PC-3 (cell line): ENCODE measurements at regions of chr4 and their contacts with region 1.

Region 1: DNA sequence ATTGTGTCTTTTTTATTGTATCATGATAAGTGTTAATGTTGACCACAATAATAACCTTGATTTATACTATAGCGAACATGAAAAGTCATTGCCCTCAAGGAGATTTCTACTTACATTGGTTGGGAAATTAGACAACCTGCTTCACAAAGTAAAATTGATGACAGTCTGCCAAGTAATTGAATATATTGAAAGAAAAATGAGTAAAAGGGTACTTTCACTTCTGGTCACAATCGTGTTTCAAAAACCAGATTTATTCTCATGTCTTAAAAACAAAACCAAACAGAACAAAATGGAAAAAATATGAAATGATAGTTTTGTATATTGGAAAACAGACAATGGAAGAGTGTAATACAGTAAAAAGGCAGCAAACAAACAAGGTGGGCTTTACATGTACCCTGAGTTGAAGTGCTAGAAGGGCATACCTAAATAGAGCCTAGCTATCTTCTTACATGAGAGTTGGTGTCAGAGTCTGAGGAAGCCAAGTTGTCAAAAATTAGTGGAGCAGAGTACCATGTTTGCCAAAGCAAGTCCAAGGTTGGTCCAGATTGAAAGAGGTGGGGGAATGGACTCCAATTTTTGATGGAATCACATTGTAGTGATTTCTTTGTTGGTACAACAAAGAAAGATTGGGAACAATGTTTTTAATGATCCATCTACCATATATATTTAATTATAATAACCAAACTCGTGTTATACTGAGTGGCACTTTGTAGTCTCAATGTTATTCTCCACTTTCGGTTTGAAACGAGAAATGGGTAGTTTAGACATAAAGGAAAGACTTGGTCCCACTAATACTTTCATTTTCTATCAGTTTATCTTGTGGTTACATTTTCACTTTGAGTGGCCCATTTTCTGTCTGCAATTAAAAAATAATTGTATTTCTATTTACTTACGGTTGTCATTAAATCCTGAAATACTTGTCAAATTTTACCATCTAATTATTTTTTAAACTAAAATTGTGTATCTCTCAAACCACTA is 775.6 kb downstream of the STIM2 start:
- DNase-seq: no peak
- ATAC-seq: no peak
- H3K4me3 ChIP-seq: no peak overlapping the region
- H3K27ac ChIP-seq: no peak overlapping the region
- H3K4me1 ChIP-seq: no peaks in the 10 kb centered on the region
- H3K27me3 ChIP-seq: no peaks in the 10 kb centered on the region
- CTCF ChIP-seq: no peak

Region 2: DNA sequence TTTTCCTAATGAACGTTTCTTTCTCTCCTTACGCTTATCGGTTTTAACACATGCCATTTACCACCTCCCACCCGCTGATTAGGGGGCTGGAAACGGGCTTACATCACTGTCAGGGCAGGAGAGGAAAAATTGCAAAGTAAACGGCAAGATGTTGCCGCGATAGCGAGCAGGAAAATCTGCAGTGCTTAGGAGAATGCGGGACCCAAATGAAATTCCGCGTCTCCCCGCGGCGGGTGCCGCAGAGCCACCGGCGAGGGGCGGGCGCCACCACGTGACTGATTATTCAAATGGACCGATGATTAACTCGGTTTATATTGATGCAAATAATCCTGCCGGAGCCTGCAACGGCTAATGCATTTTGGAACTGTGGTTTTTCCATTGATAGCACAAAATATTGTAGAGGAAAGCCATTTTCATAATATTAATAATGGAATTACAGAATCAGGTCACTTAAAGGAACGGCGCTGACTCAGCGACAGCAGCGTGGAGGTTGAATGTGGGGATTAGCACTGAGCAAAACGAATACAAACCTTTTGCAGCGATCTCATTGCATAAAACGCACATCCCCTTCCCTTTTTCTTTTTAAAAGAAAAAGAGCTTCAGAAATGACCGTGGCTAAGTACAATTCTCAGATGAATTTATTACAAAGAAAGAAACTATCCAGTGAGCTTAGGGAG is 551.4 kb before region 1 on chr4:
- CTCF ChIA-PET with region 1: no interaction called
- POLR2A ChIA-PET with region 1: no interaction called
- intact Hi-C with region 1: no loop called
- DNase-seq: peak; percentile 34
- ATAC-seq: no peak
- H3K4me3 ChIP-seq: peak overlapping the region; percentile 59
- H3K27ac ChIP-seq: no peak overlapping the region
- H3K4me1 ChIP-seq: no peaks in the 10 kb centered on the region
- H3K27me3 ChIP-seq: peaks cover 16% of the 10 kb centered on the region
- CTCF ChIP-seq: 0 out of 2 replicates have a peak, but pooled peaks have one; percentile 24

Region 3: GRCh38 chr4:27176400-27176799 is 459.8 kb before region 1 on chr4:
- CTCF ChIA-PET with region 1: no interaction called
- POLR2A ChIA-PET with region 1: no interaction called
- intact Hi-C with region 1: loop called (anchors 1 kb)
- DNase-seq: peak; percentile 59
- ATAC-seq: peak; percentile 81
- H3K4me3 ChIP-seq: no peak overlapping the region
- H3K27ac ChIP-seq: no peak overlapping the region
- H3K4me1 ChIP-seq: no peaks in the 10 kb centered on the region
- H3K27me3 ChIP-seq: no peaks in the 10 kb centered on the region
- CTCF ChIP-seq: peak; percentile 77

Region 4: GRCh38 chr4:27357283-27357682 is 278.9 kb before region 1 on chr4:
- CTCF ChIA-PET with region 1: no interaction called
- POLR2A ChIA-PET with region 1: no interaction called
- intact Hi-C with region 1: loop called (anchors 2 kb)
- DNase-seq: peak; percentile 41
- ATAC-seq: peak; percentile 60; the same call in 1 of the 2 replicates
- H3K4me3 ChIP-seq: peak overlapping the region; percentile 24; the same call in 1 of the 2 replicates
- H3K27ac ChIP-seq: no peak overlapping the region
- H3K4me1 ChIP-seq: peaks cover 15% of the 10 kb centered on the region
- H3K27me3 ChIP-seq: no peaks in the 10 kb centered on the region
- CTCF ChIP-seq: peak; percentile 63; the same call in 1 of the 2 replicates

Region 5: GRCh38 chr4:27412613-27413012 is 223.6 kb before region 1 on chr4:
- CTCF ChIA-PET with region 1: no interaction called
- POLR2A ChIA-PET with region 1: no interaction called
- intact Hi-C with region 1: loop called (anchors 1 kb)
- DNase-seq: peak; percentile 43
- ATAC-seq: peak; percentile 48; the same call in 1 of the 2 replicates
- H3K4me3 ChIP-seq: no peak overlapping the region
- H3K27ac ChIP-seq: no peak overlapping the region
- H3K4me1 ChIP-seq: peaks cover 9% of the 10 kb centered on the region; the same call in 1 of the 2 replicates
- H3K27me3 ChIP-seq: no peaks in the 10 kb centered on the region
- CTCF ChIP-seq: peak; percentile 44